ENCODE measurements at regions of chr9 and their contacts with region 1.

Region 1: GRCh38 chr9:73104342-73104741 is 47.3 kb upstream of the ANXA1 start:
- DNase-seq: no peak
- ATAC-seq: no peak
- H3K4me3 ChIP-seq: no peak overlapping the region
- H3K4me3 Mint-ChIP-seq: no peak overlapping the region
- H3K27ac ChIP-seq: no peak overlapping the region
- H3K27ac Mint-ChIP-seq: no peak overlapping the region
- H3K4me1 ChIP-seq: no peaks in the 10 kb centered on the region
- H3K4me1 Mint-ChIP-seq: no peaks in the 10 kb centered on the region
- H3K27me3 ChIP-seq: no peaks in the 10 kb centered on the region
- H3K27me3 Mint-ChIP-seq: no peaks in the 10 kb centered on the region
- CTCF ChIP-seq: no peak

Region 2: GRCh38 chr9:72661401-72662135 is 442.8 kb before region 1 on chr9:
- CTCF ChIA-PET with region 1: no interaction called
- POLR2A ChIA-PET with region 1: no interaction called
- intact Hi-C with region 1: no loop called
- DNase-seq: no peak
- ATAC-seq: no peak
- H3K4me3 ChIP-seq: no peak overlapping the region
- H3K4me3 Mint-ChIP-seq: no peak overlapping the region
- H3K27ac ChIP-seq: no peak overlapping the region
- H3K27ac Mint-ChIP-seq: no peak overlapping the region
- H3K4me1 ChIP-seq: no peaks in the 10 kb centered on the region
- H3K4me1 Mint-ChIP-seq: no peaks in the 10 kb centered on the region
- H3K27me3 ChIP-seq: no peaks in the 10 kb centered on the region
- H3K27me3 Mint-ChIP-seq: peaks cover 13% of the 10 kb centered on the region
- CTCF ChIP-seq: no peak

Region 3: DNA sequence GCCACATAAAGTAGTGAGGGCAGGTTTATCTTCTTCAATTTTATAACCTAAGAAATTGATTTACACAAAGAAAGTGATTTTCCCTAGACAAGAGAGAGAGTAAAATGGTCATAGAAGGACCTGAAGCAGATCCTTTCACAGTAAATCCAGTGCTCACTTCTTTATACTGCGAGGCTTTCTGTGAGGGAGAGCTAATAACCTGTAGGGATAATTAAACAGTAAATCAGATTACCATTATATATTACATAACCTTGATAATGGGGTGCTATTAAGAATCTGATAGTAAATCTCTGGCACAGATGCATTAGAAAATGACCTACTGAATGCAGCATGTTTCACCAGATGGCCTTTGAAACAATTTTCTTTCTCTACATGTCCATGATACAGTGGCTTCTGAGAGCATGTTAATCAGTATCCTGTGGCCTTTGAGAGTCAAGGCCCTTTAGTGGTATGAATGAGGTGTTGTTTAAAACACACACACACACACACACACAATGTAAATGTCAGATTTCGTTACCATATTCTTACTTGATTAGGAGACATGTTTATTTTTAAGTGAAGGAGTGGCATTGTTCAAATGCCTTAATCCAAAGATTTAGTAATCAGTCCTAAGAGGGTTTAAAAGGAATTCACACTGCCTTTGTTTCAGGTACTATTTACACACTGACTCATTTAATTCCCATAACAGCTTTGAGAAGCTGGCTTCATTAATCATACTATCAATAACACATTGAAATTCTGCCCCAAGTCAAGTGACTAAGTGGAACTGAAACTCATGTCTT is 276.2 kb before region 1 on chr9:
- CTCF ChIA-PET with region 1: no interaction called
- POLR2A ChIA-PET with region 1: no interaction called
- intact Hi-C with region 1: no loop called
- DNase-seq: no peak
- ATAC-seq: no peak
- H3K4me3 ChIP-seq: no peak overlapping the region
- H3K4me3 Mint-ChIP-seq: no peak overlapping the region
- H3K27ac ChIP-seq: no peak overlapping the region
- H3K27ac Mint-ChIP-seq: no peak overlapping the region
- H3K4me1 ChIP-seq: no peaks in the 10 kb centered on the region
- H3K4me1 Mint-ChIP-seq: no peaks in the 10 kb centered on the region
- H3K27me3 ChIP-seq: peaks cover 0 to 2% of the 10 kb centered on the region in 2 experiments
- H3K27me3 Mint-ChIP-seq: no peaks in the 10 kb centered on the region
- CTCF ChIP-seq: no peak

Region 4: DNA sequence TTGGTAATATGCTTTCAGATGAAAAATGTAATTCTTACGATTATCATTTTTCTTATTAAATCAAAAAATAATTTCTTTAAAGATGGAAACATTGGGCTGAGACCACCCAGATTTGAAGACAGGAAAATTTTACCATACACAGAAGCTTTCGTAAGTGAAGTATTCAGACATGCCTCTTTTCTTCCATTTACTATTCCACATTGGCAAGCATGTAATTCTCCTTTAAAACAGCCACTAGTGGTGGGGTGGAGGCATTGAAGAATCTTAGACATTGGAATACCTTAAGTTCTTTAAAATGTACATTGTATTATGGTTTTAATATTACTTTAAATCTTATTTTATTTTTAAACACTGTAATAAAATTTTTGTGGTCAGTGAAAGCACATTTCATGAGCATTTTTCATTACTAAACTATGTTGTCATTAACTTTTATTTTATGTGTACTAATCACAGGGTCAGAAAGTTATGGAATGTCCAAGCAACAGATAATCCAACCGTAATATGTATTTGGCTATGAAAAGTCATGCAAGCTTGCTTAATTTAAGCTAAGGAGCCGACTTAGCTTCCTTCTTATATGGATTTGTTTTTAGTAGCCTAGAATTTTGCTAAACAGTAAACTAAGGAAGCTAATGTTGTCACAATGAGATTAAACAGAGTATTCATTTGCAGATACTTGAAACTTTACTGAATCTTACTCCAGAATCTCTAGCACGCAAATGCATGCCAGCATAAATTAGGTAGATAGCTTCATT is 54.1 kb before region 1 on chr9:
- CTCF ChIA-PET with region 1: no interaction called
- POLR2A ChIA-PET with region 1: no interaction called
- intact Hi-C with region 1: no loop called
- DNase-seq: no peak
- ATAC-seq: no peak
- H3K4me3 ChIP-seq: no peak overlapping the region
- H3K4me3 Mint-ChIP-seq: no peak overlapping the region
- H3K27ac ChIP-seq: no peak overlapping the region
- H3K27ac Mint-ChIP-seq: no peak overlapping the region
- H3K4me1 ChIP-seq: no peaks in the 10 kb centered on the region
- H3K4me1 Mint-ChIP-seq: no peaks in the 10 kb centered on the region
- H3K27me3 ChIP-seq: no peaks in the 10 kb centered on the region
- H3K27me3 Mint-ChIP-seq: peaks cover 16% of the 10 kb centered on the region
- CTCF ChIP-seq: no peak

Region 5: GRCh38 chr9:73116031-73116430 is 11.7 kb after region 1 on chr9:
- CTCF ChIA-PET with region 1: interaction called, 11 read pairs
- POLR2A ChIA-PET with region 1: no interaction called
- intact Hi-C with region 1: no loop called
- DNase-seq: no peak
- ATAC-seq: no peak
- H3K4me3 ChIP-seq: no peak overlapping the region
- H3K4me3 Mint-ChIP-seq: no peak overlapping the region
- H3K27ac ChIP-seq: no peak overlapping the region
- H3K27ac Mint-ChIP-seq: no peak overlapping the region
- H3K4me1 ChIP-seq: peaks cover 21% of the 10 kb centered on the region
- H3K4me1 Mint-ChIP-seq: peaks cover 23% of the 10 kb centered on the region
- H3K27me3 ChIP-seq: no peaks in the 10 kb centered on the region
- H3K27me3 Mint-ChIP-seq: no peaks in the 10 kb centered on the region
- CTCF ChIP-seq: no peak

Region 6: GRCh38 chr9:73143606-73144328 is 39.4 kb after region 1 on chr9:
- CTCF ChIA-PET with region 1: interaction called, 14 read pairs
- POLR2A ChIA-PET with region 1: no interaction called
- intact Hi-C with region 1: no loop called
- DNase-seq: no peak
- ATAC-seq: no peak
- H3K4me3 ChIP-seq: no peak overlapping the region
- H3K4me3 Mint-ChIP-seq: no peak overlapping the region
- H3K27ac ChIP-seq: no peak overlapping the region
- H3K27ac Mint-ChIP-seq: no peak overlapping the region
- H3K4me1 ChIP-seq: peaks cover 3% of the 10 kb centered on the region
- H3K4me1 Mint-ChIP-seq: peaks cover 12% of the 10 kb centered on the region
- H3K27me3 ChIP-seq: no peaks in the 10 kb centered on the region
- H3K27me3 Mint-ChIP-seq: no peaks in the 10 kb centered on the region
- CTCF ChIP-seq: no peak

Region 7: GRCh38 chr9:73154760-73155159 is 50.4 kb after region 1 on chr9:
- CTCF ChIA-PET with region 1: interaction called, 12 read pairs
- POLR2A ChIA-PET with region 1: no interaction called
- intact Hi-C with region 1: loop called in 1 of 2 experiments (anchors 1 kb)
- DNase-seq: peak in 3 of 9 experiments; percentile 20 to 74 (median 55)
- ATAC-seq: peak; percentile 43
- H3K4me3 ChIP-seq: peak overlapping the region; percentile 39 to 64
- H3K4me3 Mint-ChIP-seq: peak overlapping the region; percentile 89
- H3K27ac ChIP-seq: peak overlapping the region; percentile 63 to 83
- H3K27ac Mint-ChIP-seq: peak overlapping the region; percentile 93
- H3K4me1 ChIP-seq: peaks cover 76% of the 10 kb centered on the region
- H3K4me1 Mint-ChIP-seq: peaks cover 76% of the 10 kb centered on the region
- H3K27me3 ChIP-seq: no peaks in the 10 kb centered on the region
- H3K27me3 Mint-ChIP-seq: no peaks in the 10 kb centered on the region
- CTCF ChIP-seq: no peak

Region 8: GRCh38 chr9:73173557-73174329 is 69.4 kb after region 1 on chr9:
- CTCF ChIA-PET with region 1: interaction called, 100 read pairs
- POLR2A ChIA-PET with region 1: no interaction called
- intact Hi-C with region 1: no loop called
- DNase-seq: no peak
- ATAC-seq: no peak
- H3K4me3 ChIP-seq: no peak overlapping the region
- H3K4me3 Mint-ChIP-seq: no peak overlapping the region
- H3K27ac ChIP-seq: no peak overlapping the region
- H3K27ac Mint-ChIP-seq: no peak overlapping the region
- H3K4me1 ChIP-seq: no peaks in the 10 kb centered on the region
- H3K4me1 Mint-ChIP-seq: no peaks in the 10 kb centered on the region
- H3K27me3 ChIP-seq: no peaks in the 10 kb centered on the region
- H3K27me3 Mint-ChIP-seq: no peaks in the 10 kb centered on the region
- CTCF ChIP-seq: no peak